GM12878 (cell line): ENCODE measurements at regions of chr7 and their contacts with region 1.

Region 1: GRCh38 chr7:133081599-133082389 is at the start of gene CHCHD3:
- DNase-seq: peak; percentile 94
- ATAC-seq: peak; percentile 99
- H3K4me3 ChIP-seq: peak within 1 kb of the TSS; percentile 90
- H3K27ac ChIP-seq: peak within 1 kb of the TSS; percentile 86
- H3K4me1 ChIP-seq: no peaks in the 10 kb centered on the region; the same call in 1 of the 2 replicates
- H3K27me3 ChIP-seq: no peaks in the 10 kb centered on the region
- CTCF ChIP-seq: no peak
- EP300 ChIP-seq: peak; percentile 7 to 58; a peak in 1 of 4 replicates
- POLR2A ChIP-seq: peak; percentile 87
- RAD21 ChIP-seq: no peak
- polyA plus RNA-seq, gene CHCHD3: 38.3 to 66.1 TPM

Region 2: DNA sequence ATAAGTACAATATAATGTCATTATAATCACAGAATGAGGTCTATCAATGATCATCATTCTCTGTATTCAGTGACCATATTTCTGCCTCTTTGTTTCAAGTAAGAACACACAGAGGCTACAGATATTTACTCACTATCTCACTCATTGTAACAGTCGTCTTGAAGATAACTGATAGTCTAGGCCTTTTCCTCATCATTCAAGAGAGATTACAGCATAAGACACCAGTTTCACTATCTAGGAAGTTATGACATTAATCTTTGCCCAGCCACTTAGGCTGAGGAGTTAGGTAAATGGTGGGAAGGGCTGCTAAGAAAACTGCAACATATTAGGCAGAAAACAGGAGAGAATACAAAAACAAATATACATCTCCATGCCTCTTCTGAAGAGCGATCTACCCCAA is 125.2 kb before region 1 on chr7:
- CTCF ChIA-PET with region 1: no interaction called
- POLR2A ChIA-PET with region 1: no interaction called
- RAD21 ChIA-PET with region 1: no interaction called
- SMC1A ChIA-PET with region 1: no interaction called
- in situ Hi-C with region 1: no loop called
- intact Hi-C with region 1: no loop called
- DNase-seq: no peak
- ATAC-seq: no peak
- H3K4me3 ChIP-seq: no peak overlapping the region
- H3K27ac ChIP-seq: no peak overlapping the region
- H3K4me1 ChIP-seq: no peaks in the 10 kb centered on the region
- H3K27me3 ChIP-seq: no peaks in the 10 kb centered on the region
- CTCF ChIP-seq: no peak
- EP300 ChIP-seq: no peak
- POLR2A ChIP-seq: no peak
- RAD21 ChIP-seq: no peak

Region 3: GRCh38 chr7:133036289-133036688 is 45.5 kb before region 1 on chr7:
- CTCF ChIA-PET with region 1: no interaction called
- POLR2A ChIA-PET with region 1: no interaction called
- RAD21 ChIA-PET with region 1: interaction called, 3 read pairs
- SMC1A ChIA-PET with region 1: interaction called, 3 read pairs
- in situ Hi-C with region 1: no loop called
- intact Hi-C with region 1: loop called (anchors 2 kb)
- DNase-seq: no peak
- ATAC-seq: no peak
- H3K4me3 ChIP-seq: no peak overlapping the region
- H3K27ac ChIP-seq: no peak overlapping the region
- H3K4me1 ChIP-seq: peaks cover 6% of the 10 kb centered on the region
- H3K27me3 ChIP-seq: no peaks in the 10 kb centered on the region
- CTCF ChIP-seq: no peak
- EP300 ChIP-seq: no peak
- POLR2A ChIP-seq: no peak
- RAD21 ChIP-seq: no peak

Region 4: GRCh38 chr7:133051066-133051465 is 30.7 kb before region 1 on chr7:
- CTCF ChIA-PET with region 1: interaction called, 10 read pairs
- POLR2A ChIA-PET with region 1: no interaction called
- RAD21 ChIA-PET with region 1: interaction called, 8 read pairs
- SMC1A ChIA-PET with region 1: interaction called, 5 read pairs
- in situ Hi-C with region 1: no loop called
- intact Hi-C with region 1: no loop called
- DNase-seq: no peak
- ATAC-seq: peak; percentile 74
- H3K4me3 ChIP-seq: no peak overlapping the region
- H3K27ac ChIP-seq: no peak overlapping the region
- H3K4me1 ChIP-seq: peaks cover 11% of the 10 kb centered on the region; the same call in 1 of the 2 replicates
- H3K27me3 ChIP-seq: no peaks in the 10 kb centered on the region
- CTCF ChIP-seq: peak; percentile 22 to 40 (median 34); a peak in 3 of 6 replicates
- EP300 ChIP-seq: no peak
- POLR2A ChIP-seq: no peak
- RAD21 ChIP-seq: peak; percentile 45

Region 5: GRCh38 chr7:133059263-133059662 is 22.5 kb before region 1 on chr7:
- CTCF ChIA-PET with region 1: interaction called, 3 read pairs
- POLR2A ChIA-PET with region 1: no interaction called
- RAD21 ChIA-PET with region 1: interaction called, 3 read pairs
- SMC1A ChIA-PET with region 1: interaction called, 11 read pairs
- in situ Hi-C with region 1: no loop called
- intact Hi-C with region 1: no loop called
- DNase-seq: no peak
- ATAC-seq: peak; percentile 61
- H3K4me3 ChIP-seq: 0 out of 2 replicates have a peak overlapping the region, but pooled peaks have one; percentile 29
- H3K27ac ChIP-seq: peak overlapping the region; percentile 51
- H3K4me1 ChIP-seq: peaks cover 10% of the 10 kb centered on the region
- H3K27me3 ChIP-seq: no peaks in the 10 kb centered on the region
- CTCF ChIP-seq: no peak
- EP300 ChIP-seq: no peak
- POLR2A ChIP-seq: no peak
- RAD21 ChIP-seq: no peak

Region 6: DNA sequence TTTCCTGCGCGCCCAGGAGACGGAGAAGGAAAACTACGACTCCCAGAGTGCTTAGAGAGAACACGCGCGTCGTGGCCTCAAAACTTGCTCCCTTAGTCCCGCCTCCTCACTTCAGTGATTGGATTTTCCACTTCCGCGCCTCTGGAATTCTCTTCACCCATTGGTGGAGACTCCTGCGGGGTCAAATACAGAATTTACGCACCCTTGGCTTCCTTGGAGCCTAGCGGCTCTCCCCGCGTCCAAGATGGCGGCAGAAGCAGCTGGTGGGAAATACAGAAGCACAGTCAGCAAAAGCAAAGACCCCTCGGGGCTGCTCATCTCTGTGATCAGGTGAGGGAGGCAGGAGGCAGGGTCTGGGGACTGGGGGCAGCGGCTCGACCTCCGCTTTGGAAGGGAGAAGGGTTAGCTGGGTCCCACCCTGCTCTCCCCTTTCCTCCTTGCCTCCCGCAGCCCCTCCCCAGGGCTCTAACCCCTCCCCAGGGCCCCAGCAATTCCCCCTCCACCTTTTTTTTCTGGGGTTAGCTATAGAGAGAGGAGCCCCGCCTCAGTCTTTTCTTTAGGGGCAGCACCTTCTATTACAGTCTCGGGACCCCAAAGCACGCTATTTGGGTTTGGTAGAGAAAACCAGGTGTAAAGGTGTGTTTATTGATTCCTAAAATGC is 171.2 kb after region 1 on chr7 and contains the start of gene EXOC4:
- CTCF ChIA-PET with region 1: no interaction called
- POLR2A ChIA-PET with region 1: interaction called, 5 read pairs
- RAD21 ChIA-PET with region 1: no interaction called
- SMC1A ChIA-PET with region 1: interaction called, 4 read pairs
- in situ Hi-C with region 1: no loop called
- intact Hi-C with region 1: loop called (anchors 2 kb)
- DNase-seq: peak; percentile 95
- ATAC-seq: peak; percentile 99
- H3K4me3 ChIP-seq: peak within 1 kb of the TSS; percentile 94
- H3K27ac ChIP-seq: peak within 1 kb of the TSS; percentile 74
- H3K4me1 ChIP-seq: no peaks in the 10 kb centered on the region
- H3K27me3 ChIP-seq: no peaks in the 10 kb centered on the region
- CTCF ChIP-seq: no peak
- EP300 ChIP-seq: no peak
- POLR2A ChIP-seq: peak; percentile 87
- RAD21 ChIP-seq: no peak
- polyA plus RNA-seq, gene EXOC4: 13.2 to 14.5 TPM